PC-9 (cell line): ENCODE measurements at regions of chr12 and their contacts with region 1.

Region 1: DNA sequence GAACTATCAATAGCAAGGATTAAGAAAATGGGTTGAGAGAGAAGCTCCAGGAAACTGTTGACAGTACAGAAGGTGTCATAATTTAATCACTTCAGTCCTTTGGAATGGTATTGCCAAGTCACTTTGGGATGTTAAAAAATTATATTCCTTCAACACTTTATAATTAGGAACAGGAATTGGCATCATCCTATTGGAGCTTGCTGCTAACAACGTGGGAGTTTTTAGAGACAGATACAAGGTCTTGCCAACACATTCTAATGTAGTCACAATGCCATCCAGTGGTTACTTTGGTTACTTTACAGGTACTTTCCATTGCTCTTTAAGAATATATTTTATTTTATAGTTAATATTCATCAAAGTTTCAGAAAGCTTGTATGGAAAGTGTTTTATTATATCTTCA is 310.1 kb downstream of the SYT1 start:
- DNase-seq: no peak
- H3K4me3 ChIP-seq: no peak overlapping the region
- H3K27ac ChIP-seq: no peak overlapping the region
- H3K4me1 ChIP-seq: no peaks in the 10 kb centered on the region
- H3K27me3 ChIP-seq: no peaks in the 10 kb centered on the region
- CTCF ChIP-seq: peak; percentile 67

Region 2: GRCh38 chr12:78146365-78146772 is 1028.3 kb before region 1 on chr12:
- CTCF ChIA-PET with region 1: interaction called, 4 read pairs
- POLR2A ChIA-PET with region 1: no interaction called
- intact Hi-C with region 1: loop called (anchors 1 kb)
- DNase-seq: no peak
- H3K4me3 ChIP-seq: no peak overlapping the region
- H3K27ac ChIP-seq: no peak overlapping the region
- H3K4me1 ChIP-seq: no peaks in the 10 kb centered on the region
- H3K27me3 ChIP-seq: no peaks in the 10 kb centered on the region
- CTCF ChIP-seq: peak; percentile 86

Region 3: DNA sequence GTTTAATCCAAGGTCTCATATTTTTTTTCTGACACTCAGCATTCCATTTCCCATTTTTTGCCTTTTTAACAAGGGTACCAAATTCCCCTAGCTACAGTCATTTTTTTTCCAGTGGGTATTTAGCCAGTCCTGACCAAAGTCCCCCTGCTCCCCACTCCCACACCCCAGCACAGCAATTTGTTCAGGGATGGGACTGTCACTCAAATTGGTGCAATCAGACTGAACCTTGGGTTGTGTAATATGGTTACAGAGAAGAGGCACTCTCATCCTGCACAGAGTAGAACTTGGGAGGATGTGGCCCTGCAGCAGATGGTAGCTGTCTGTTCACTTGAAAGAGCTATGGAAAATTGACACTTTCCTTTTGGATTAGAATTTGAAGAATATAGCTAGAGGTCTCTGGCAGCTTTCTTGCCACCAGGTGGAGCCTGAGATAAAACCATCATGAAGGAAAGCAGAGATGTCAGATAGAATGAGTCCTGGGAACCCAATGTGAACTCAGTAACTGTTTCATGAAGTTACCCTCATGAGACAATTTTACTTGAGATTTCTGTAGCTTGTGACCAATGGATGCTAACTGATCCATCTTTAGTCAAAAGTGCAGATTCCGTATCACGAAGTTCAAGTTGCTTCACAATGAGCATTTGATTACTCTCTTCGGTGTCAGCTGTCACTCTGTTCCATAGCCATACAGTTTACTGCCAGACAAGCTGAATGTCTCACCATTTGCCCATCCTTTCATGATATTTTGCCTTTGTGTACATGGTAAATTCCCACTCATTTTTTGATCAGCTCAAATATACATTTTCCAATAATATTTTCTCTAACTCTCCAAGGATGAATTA is 704.1 kb before region 1 on chr12:
- CTCF ChIA-PET with region 1: interaction called, 8 read pairs
- POLR2A ChIA-PET with region 1: no interaction called
- intact Hi-C with region 1: loop called (anchors 2 kb)
- DNase-seq: peak in 1 of 2 experiments; percentile 9
- H3K4me3 ChIP-seq: no peak overlapping the region
- H3K27ac ChIP-seq: no peak overlapping the region
- H3K4me1 ChIP-seq: no peaks in the 10 kb centered on the region
- H3K27me3 ChIP-seq: no peaks in the 10 kb centered on the region
- CTCF ChIP-seq: peak; percentile 71

Region 4: GRCh38 chr12:78562368-78563205 is 612.0 kb before region 1 on chr12:
- CTCF ChIA-PET with region 1: no interaction called
- POLR2A ChIA-PET with region 1: no interaction called
- intact Hi-C with region 1: loop called (anchors 5 kb)
- DNase-seq: no peak
- H3K4me3 ChIP-seq: no peak overlapping the region
- H3K27ac ChIP-seq: no peak overlapping the region
- H3K4me1 ChIP-seq: no peaks in the 10 kb centered on the region; the same call in 1 of the 2 replicates
- H3K27me3 ChIP-seq: no peaks in the 10 kb centered on the region
- CTCF ChIP-seq: peak; percentile 54

Region 5: GRCh38 chr12:79300166-79300501 is 125.5 kb after region 1 on chr12:
- CTCF ChIA-PET with region 1: no interaction called
- POLR2A ChIA-PET with region 1: no interaction called
- intact Hi-C with region 1: no loop called
- DNase-seq: peak; percentile 2 to 62
- H3K4me3 ChIP-seq: no peak overlapping the region
- H3K27ac ChIP-seq: no peak overlapping the region
- H3K4me1 ChIP-seq: no peaks in the 10 kb centered on the region
- H3K27me3 ChIP-seq: no peaks in the 10 kb centered on the region
- CTCF ChIP-seq: no peak

Region 6: DNA sequence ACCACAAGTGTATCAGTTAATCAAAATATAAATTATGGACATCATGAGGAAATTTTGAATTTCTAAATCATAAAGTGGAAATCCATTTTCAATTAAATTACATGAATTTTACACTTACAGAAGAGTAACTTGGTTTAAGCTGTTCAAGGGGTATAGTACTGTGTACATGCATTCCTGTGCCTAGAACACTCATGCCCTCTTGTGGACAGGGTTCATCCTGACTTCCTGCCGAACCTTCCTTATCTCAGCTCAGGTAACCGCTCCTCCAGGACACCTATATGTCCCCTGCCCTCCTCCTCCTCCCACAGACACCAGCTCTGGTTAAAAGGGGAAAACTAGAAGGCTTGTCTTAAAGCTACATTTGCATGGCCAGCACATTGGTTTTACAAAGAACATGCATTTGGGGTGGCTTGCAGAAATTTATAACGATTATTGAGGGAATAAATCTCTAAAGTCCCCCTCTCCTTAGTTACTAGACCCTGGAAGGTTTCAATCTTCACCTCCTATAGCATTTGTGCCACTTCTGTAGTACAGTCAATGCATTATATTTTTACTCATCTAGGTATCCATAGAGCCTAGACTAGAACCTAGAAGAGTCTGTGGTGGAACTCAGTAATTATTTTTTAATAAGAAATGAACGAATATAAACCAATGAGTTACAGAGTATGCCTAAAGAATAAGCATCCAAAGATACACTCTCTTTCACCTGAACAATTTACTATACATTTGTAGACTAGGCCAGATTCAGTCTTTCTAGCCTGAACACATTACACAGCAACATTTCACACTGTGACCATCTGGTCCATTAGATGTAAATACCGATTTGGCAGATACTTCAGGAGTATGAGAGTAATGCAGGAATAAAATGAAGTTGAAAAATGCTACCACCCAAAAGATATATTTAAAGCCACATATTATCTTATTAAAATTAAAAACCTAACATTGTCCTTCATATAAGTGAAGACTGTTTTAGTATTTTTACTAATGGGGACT is 170.5 kb after region 1 on chr12:
- CTCF ChIA-PET with region 1: interaction called, 3 read pairs
- POLR2A ChIA-PET with region 1: no interaction called
- intact Hi-C with region 1: loop called (anchors 10 kb)
- DNase-seq: peak in 1 of 2 experiments; percentile 37
- H3K4me3 ChIP-seq: no peak overlapping the region
- H3K27ac ChIP-seq: no peak overlapping the region
- H3K4me1 ChIP-seq: no peaks in the 10 kb centered on the region
- H3K27me3 ChIP-seq: no peaks in the 10 kb centered on the region
- CTCF ChIP-seq: peak; percentile 79